Posterior vena cava (tissue), 2 donors: ENCODE measurements at regions of chr13 and their contacts with region 1.

Region 1: DNA sequence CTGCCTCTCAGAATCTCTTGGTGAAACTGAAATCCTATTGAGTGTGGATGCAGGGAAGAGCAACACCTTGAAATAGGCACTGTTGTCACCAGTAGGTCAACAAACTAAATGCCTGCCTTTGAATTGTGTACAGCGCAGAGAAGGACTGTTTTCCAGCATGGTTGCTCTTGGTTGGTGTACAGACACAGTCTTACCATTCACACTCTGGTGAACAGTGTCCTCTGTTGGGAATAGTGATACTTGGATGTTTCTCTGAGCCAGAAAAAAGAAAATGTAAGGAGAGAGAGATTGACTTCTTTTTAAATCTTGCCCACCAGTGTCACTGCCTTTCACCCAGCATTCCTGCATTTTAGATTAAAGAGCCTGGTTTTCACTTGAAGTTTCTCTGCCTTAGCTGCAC is 179.7 kb downstream of the STK24 start:
- DNase-seq: no peak

Region 2: DNA sequence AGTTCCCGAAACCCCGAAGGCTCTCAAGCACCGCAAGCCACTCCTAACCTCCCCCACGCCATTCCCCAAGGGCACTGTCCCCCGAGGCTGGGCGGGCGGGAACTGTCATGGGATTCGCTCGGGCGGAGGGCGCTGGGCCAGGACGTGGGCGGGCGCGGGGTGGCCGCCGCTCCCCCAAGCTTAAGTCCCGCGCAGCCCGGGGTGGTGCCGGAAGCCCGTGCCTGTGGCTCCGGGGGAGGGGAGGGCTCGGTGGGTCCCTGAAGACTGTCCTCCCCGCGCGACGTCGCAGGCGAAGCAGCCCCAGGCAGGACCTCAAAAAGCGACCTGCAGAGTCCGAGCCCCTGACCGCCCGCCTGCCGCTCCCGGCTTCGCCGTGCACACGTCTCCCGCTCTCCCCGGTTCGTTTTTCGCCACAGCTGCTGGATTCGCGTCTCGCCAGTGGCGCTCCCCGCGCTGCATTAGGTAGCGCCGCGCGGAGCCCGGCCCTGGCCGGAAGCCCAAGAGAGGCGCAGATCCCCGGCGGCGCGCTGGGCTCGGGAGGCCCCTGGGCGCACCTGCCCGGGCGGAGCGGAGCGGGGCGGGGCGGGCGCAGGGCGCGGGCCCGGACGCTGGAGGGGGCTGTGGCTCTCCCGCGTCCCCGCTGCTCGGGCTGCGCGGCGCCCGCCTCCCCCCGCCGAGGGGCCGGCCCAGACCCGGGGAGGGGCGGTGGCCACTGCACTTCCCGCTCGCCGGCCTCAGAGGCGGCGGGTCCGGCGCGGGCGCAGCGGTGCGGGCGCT is 254.7 kb before region 1 on chr13 and contains the start of gene FARP1:
- intact Hi-C with region 1: loop called in 1 of 2 experiments (anchors 10 kb)
- DNase-seq: peak; percentile 93
- total RNA-seq, gene FARP1: 61.4 to 89.2 TPM

Region 3: GRCh38 chr13:98755729-98756128 is 358.5 kb after region 1 on chr13:
- intact Hi-C with region 1: loop called in 1 of 2 experiments (anchors 5 kb)
- DNase-seq: no peak